OCI-LY7 (cell line): ENCODE measurements at regions of chr1 and their contacts with region 1.

Region 1: DNA sequence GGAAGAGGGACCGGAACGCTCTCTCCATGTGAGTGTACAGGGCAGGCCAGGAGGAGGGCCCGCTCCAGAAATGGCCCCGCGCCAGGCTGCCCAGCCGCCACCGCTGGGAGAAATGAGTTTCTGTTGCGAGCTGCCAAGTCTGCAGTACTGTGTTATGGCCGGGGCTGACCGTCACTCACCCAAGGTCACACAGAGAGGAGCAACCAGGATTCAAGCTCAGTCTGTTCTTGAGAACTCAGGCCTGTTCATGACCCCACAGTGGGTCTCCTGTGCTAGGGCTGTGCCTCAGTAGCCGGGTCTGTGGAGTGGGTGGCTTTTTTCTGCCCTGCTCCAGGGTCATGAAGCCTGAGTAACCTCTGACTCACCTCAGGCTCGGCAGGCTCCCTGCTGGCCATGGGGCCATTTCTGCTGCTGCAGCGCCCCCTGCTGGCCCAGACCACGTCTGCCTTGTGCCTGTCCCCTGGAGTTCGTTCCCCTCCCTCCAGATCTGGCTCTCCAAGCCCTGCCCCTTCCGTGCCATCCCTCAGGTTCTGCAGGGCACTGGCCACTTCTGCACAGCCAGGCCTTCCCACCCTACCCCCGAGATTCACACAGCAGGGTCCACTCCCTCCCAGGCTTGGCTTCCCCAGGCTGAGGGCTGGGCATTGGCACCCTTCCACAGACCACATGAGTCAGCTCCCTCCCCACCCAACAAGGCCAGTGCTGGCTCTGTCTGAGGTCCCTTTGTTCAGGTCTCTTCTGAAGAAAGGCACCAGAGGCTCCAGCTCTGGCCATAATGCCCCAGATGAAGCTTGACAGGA is 51.8 kb downstream of the EDN2 start:
- DNase-seq: peak; percentile 60
- H3K4me3 ChIP-seq: no peak overlapping the region
- H3K27ac ChIP-seq: no peak overlapping the region
- H3K4me1 ChIP-seq: no peaks in the 10 kb centered on the region
- CTCF ChIP-seq: peak; percentile 82

Region 2: GRCh38 chr1:41268154-41268770 is 164.4 kb before region 1 on chr1:
- CTCF ChIA-PET with region 1: interaction called, 3 read pairs
- POLR2A ChIA-PET with region 1: no interaction called
- intact Hi-C with region 1: loop called (anchors 1 kb)
- DNase-seq: peak; percentile 53
- H3K4me3 ChIP-seq: no peak overlapping the region
- H3K27ac ChIP-seq: no peak overlapping the region
- H3K4me1 ChIP-seq: no peaks in the 10 kb centered on the region
- CTCF ChIP-seq: peak; percentile 94

Region 3: GRCh38 chr1:41282679-41283317 is 149.9 kb before region 1 on chr1:
- CTCF ChIA-PET with region 1: no interaction called
- POLR2A ChIA-PET with region 1: no interaction called
- intact Hi-C with region 1: loop called (anchors 5 kb)
- DNase-seq: peak; percentile 19
- H3K4me3 ChIP-seq: no peak overlapping the region
- H3K27ac ChIP-seq: no peak overlapping the region
- H3K4me1 ChIP-seq: no peaks in the 10 kb centered on the region
- CTCF ChIP-seq: peak; percentile 83

Region 4: DNA sequence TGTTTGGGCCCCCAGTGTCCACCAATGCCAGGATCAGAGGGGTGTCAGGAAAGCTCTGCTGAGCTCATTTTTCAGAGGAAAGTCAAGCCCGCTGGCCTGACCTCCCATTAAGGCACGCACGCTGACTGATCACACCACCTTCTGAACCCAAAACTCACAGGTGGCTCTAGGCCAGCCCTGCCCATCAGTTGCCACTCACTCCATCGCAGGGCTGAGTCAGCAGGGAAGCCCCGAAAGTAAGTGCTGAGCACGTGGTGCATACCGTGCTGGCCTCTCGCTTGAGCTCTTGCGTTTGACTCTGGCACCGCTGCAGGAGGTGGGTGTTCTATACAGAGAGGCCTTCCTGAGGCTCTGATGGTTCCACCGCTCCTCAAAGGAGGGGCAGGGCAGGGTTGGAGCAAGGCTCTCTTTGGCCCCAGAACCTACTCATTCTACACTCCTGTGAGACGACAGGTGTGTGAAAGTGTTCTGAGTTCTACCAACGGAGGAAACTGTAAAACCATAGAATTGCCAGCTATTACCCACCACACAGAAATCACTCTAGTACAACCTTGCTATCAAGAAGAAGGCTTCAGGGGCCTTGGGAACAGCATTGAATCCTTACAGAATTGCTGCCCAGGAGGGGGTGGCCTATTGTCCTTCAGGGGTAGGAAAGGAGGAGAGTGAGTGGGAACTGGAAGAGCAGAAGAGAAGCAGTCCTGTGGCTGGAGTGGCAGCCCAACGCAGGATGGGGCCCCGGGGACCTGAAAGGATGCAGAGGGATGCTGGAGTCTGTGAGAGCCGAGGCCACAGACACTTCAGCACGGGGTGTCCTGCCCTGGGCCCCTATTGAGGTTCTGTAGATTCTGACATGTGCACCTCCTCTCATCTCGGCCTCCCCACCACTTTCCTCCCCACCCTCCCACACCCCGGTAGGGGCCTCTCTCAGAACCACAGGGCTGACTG is 266.5 kb after region 1 on chr1:
- CTCF ChIA-PET with region 1: no interaction called
- POLR2A ChIA-PET with region 1: no interaction called
- intact Hi-C with region 1: no loop called
- DNase-seq: no peak
- H3K4me3 ChIP-seq: no peak overlapping the region
- H3K27ac ChIP-seq: no peak overlapping the region
- H3K4me1 ChIP-seq: no peaks in the 10 kb centered on the region
- CTCF ChIP-seq: no peak